ENCODE measurements at regions of chr1 and their contacts with region 1.

Region 1: DNA sequence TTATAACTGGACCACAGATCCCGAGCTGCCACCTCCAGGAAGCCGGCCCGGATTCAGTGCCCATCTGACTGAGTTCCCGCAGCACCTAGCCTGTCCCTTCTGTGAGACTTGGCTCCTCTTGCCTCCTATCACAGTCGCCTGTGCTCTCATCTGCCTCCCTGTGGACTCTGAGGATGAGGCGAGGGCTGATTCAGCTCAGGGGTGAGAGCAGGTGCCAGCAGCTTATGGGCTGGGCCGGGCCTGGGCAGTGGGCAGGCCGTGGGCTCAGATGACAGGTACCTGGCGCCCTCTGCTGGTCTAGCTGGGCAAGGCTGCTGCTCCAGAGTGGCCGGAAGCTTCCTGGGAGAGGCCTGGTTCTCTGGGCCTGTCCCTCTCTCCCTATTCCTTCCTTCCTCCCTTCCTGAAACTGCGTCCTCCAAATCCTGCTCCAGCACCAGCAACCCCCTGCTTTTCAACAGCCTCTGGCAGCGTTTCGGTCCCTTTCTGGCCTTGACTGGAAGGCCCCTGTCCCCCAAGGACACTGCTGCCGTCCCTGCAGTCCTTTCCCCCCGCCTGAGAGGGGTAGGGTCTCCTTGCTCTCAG is 17.3 kb upstream of the PCSK9 start:
- DNase-seq: peak; percentile 96
- ATAC-seq: peak; percentile 100
- H3K4me3 Mint-ChIP-seq: no peak overlapping the region
- H3K27ac Mint-ChIP-seq: peak overlapping the region; percentile 82
- H3K4me1 Mint-ChIP-seq: peaks cover 44% of the 10 kb centered on the region
- H3K27me3 Mint-ChIP-seq: peaks cover 10% of the 10 kb centered on the region; the same call in 1 of the 2 replicates
- CTCF ChIP-seq: peak; percentile 88

Region 2: DNA sequence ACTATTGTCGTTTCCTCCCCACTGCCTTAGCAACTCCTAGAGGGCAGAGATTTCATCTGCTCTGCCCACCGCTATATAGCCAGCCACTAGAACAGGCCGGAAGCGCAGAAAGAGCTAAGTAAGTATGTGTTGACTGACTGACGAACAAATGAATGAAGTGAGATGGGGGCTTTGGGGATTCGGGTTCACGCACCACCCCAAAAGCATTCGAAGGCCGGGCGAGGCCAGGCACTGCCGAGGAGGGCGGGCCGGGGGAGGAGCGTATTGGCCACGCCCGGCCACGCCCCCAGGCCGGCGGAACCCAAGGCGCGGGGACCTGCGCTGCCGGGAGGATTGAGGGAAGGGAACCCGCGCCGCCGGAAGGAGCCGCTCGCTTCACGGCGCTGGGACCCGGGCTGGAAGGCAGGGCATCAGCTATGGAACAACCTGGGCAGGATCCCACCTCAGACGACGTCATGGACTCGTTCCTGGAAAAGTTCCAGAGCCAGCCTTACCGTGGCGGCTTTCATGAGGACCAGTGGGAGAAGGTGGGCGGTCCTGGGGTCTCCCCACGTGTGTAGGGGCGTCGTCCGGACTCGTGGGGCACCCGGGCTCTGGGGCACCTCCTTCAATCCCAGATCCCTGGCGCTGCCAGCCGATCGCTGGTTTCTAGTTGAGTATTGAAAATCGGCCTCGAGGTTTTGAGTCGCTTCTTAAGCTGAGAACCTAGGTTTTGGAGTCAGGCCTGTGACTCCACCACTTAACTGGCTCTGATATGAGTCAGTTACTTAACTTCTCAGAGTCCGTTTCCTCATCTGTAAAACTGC is 306.4 kb before region 1 on chr1 and contains the start of gene TTC4:
- CTCF ChIA-PET with region 1: no interaction called
- POLR2A ChIA-PET with region 1: no interaction called
- DNase-seq: peak; percentile 85
- ATAC-seq: peak; percentile 96
- H3K4me3 Mint-ChIP-seq: peak within 1 kb of the TSS; percentile 92
- H3K27ac Mint-ChIP-seq: peak within 1 kb of the TSS; percentile 84
- H3K4me1 Mint-ChIP-seq: peaks cover 14% of the 10 kb centered on the region
- H3K27me3 Mint-ChIP-seq: peaks cover 22% of the 10 kb centered on the region
- CTCF ChIP-seq: no peak
- total RNA-seq, gene TTC4: 18.8 to 21.6 TPM (median 21.4 TPM) in 3 replicates

Region 3: DNA sequence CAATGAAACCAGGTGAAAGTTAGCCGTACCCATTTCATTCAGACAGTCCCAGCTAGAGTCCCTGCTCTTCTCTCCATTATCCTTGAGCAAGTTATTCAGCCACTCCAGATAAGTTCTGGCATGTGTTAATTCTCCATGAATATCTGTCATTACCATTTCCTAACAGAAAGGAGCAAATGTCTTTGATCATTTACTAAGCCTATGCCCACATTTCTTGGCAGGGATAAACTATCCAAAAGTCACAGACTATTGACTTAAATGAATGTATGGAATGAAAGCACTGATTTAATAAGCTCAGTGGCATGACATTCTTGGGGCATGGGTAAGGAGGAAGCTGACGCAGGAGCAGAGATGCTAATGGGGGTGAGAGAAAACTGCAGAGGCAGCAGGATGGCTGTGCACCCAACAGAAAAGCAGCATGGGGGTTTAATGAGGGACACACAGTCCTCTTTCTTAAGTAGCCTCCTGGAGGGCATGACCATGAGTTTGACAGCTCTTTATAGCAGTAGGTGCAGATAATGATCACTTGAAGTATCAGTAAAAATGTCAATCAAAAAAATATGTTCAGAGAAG is 117.5 kb before region 1 on chr1:
- CTCF ChIA-PET with region 1: interaction called, 17 read pairs
- POLR2A ChIA-PET with region 1: no interaction called
- DNase-seq: no peak
- ATAC-seq: no peak
- H3K4me3 Mint-ChIP-seq: no peak overlapping the region
- H3K27ac Mint-ChIP-seq: no peak overlapping the region
- H3K4me1 Mint-ChIP-seq: peaks cover 18% of the 10 kb centered on the region
- H3K27me3 Mint-ChIP-seq: peaks cover 9% of the 10 kb centered on the region; the same call in 1 of the 2 replicates
- CTCF ChIP-seq: no peak

Region 4: DNA sequence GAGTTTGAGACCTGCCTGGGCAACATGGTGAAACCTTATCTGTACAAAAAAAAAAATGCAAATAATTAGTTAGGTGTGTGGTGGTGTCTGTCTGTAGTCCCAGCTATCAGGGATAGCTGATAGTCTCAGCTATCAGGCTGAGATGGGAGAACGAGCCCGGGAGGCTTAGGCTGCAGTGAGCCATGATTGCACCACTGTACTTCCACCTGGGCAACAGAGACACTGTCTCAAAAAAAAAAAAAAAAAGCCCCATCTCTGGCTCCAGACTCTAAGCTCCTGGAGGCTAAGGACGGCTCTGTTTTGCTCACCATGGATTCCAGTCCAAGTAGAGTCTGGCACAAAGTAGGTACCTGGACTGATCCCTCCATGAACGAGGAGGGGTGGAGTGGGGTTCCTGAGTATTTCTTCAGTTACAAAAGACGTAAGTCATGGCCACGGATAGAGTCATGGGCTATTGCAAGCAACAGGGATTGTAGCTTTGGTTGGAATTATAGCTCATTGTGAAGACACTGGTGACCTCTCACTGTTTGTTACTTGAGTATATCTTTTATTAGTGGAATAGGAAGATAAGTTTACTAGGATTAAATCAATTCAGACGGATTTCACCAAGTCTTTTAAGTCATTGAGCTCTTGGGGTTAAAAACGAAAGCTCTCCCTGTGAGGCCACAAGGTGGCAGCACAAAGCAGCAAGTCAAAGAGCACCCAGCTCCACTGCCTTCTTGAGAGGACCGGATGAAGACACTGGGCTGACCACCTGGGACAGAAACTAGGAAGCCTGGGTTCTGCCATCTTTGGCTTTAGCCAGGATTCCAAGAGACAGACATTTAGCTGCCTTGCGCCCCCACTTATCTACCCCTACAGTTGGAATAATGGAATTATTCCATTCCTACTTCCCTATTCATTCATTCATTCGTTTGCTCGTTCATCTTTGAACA is 77.2 kb before region 1 on chr1:
- CTCF ChIA-PET with region 1: interaction called, 632 read pairs
- POLR2A ChIA-PET with region 1: interaction called, 8 read pairs
- DNase-seq: peak; percentile 77
- ATAC-seq: peak; percentile 90
- H3K4me3 Mint-ChIP-seq: no peak overlapping the region
- H3K27ac Mint-ChIP-seq: no peak overlapping the region
- H3K4me1 Mint-ChIP-seq: peaks cover 5% of the 10 kb centered on the region
- H3K27me3 Mint-ChIP-seq: peaks cover 8% of the 10 kb centered on the region
- CTCF ChIP-seq: peak; percentile 80

Region 5: DNA sequence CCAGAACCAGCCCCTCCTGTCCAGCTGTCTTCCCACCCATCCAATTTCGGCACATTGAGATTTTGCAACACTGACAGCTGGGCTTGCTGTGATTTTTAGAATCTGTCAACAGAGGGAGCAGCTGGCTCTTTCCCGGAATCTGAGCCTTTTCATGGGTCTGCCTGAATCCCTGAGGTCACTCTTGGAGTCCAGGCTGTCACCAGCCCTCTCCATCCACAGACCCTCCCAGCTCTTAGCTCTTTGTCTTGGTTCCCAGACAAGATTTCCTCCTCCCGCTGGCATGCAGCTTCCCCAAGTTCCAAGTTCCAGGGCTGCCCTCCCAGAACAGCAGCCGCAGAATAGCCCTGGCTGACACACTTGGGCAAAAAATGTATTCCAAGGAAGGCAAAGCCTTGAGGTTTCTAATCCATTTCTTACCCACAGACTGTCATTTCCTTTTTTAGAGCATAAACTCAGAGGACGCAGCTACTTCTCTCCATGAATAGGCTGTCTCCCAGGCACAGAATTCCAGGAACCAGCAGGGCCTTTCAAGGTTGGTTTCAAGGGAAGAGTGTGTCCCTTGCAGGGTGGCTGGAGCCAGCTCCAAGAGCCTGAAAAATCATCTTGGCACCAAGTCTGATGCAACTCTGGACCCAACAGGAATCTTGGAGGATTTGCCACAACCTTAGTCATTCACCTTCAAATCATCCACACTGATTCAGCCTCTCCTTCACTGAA is 48.7 kb before region 1 on chr1:
- CTCF ChIA-PET with region 1: interaction called, 27 read pairs
- POLR2A ChIA-PET with region 1: no interaction called
- DNase-seq: no peak
- ATAC-seq: peak; percentile 90
- H3K4me3 Mint-ChIP-seq: no peak overlapping the region
- H3K27ac Mint-ChIP-seq: no peak overlapping the region
- H3K4me1 Mint-ChIP-seq: peaks cover 20% of the 10 kb centered on the region
- H3K27me3 Mint-ChIP-seq: peaks cover 6% of the 10 kb centered on the region
- CTCF ChIP-seq: no peak

Region 6: GRCh38 chr1:54987919-54988705 is 33.9 kb before region 1 on chr1:
- CTCF ChIA-PET with region 1: interaction called, 18 read pairs
- POLR2A ChIA-PET with region 1: no interaction called
- DNase-seq: no peak
- ATAC-seq: no peak
- H3K4me3 Mint-ChIP-seq: no peak overlapping the region
- H3K27ac Mint-ChIP-seq: no peak overlapping the region
- H3K4me1 Mint-ChIP-seq: peaks cover 12% of the 10 kb centered on the region
- H3K27me3 Mint-ChIP-seq: no peaks in the 10 kb centered on the region
- CTCF ChIP-seq: no peak

Region 7: DNA sequence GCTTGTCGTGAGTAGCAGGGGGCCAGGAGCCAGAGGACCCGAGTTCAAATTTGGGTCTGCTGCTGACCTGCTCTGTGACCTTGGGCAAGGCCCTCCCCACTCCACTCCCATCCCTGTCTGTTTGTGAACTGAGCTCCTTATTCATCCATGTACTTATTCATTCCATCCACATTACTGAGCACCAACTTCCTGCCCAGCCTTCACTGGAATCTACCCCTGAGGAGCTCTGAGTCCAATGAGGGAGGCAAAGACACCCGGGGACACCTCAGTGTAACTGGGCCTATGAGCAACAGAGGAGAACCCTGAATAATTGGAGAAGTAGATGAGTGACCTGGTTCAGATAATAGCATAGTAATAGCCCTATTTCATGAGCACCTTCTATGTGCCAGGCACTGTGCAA is 14.4 kb before region 1 on chr1:
- CTCF ChIA-PET with region 1: interaction called, 174 read pairs
- POLR2A ChIA-PET with region 1: no interaction called
- DNase-seq: no peak
- ATAC-seq: no peak
- H3K4me3 Mint-ChIP-seq: no peak overlapping the region
- H3K27ac Mint-ChIP-seq: no peak overlapping the region
- H3K4me1 Mint-ChIP-seq: peaks cover 18% of the 10 kb centered on the region
- H3K27me3 Mint-ChIP-seq: peaks cover 19% of the 10 kb centered on the region
- CTCF ChIP-seq: no peak

Region 8: GRCh38 chr1:55050283-55050682 is 28.2 kb after region 1 on chr1:
- CTCF ChIA-PET with region 1: interaction called, 64 read pairs
- POLR2A ChIA-PET with region 1: no interaction called
- DNase-seq: no peak
- ATAC-seq: no peak
- H3K4me3 Mint-ChIP-seq: no peak overlapping the region
- H3K27ac Mint-ChIP-seq: no peak overlapping the region
- H3K4me1 Mint-ChIP-seq: 0 out of 2 replicates have a peak, but pooled peaks cover 2% of the 10 kb centered on the region
- H3K27me3 Mint-ChIP-seq: no peaks in the 10 kb centered on the region
- CTCF ChIP-seq: no peak

Region 9: DNA sequence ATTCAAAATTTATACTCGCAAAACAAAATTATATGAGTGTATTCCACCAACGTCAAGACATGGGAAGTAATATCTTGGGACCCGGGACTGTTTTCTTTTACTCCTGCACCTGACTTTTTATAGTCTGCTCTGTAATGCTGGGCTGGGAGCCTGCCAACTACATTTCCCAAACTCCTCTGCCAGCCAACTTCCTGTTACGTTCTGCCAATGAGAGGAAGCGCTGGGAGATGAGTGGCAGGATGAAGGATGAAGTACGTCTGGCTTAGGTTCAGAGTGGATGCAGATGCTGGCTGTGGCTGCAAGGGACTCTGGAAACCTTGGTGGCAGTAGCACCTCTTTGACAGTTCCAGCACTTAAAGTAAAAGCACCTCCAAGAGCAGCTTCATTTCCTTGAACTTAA is 133.5 kb after region 1 on chr1:
- CTCF ChIA-PET with region 1: no interaction called
- POLR2A ChIA-PET with region 1: no interaction called
- DNase-seq: peak; percentile 15
- ATAC-seq: peak; percentile 74
- H3K4me3 Mint-ChIP-seq: no peak overlapping the region
- H3K27ac Mint-ChIP-seq: no peak overlapping the region
- H3K4me1 Mint-ChIP-seq: no peaks in the 10 kb centered on the region
- H3K27me3 Mint-ChIP-seq: no peaks in the 10 kb centered on the region
- CTCF ChIP-seq: no peak